ENCODE measurements at regions of chr7 and their contacts with region 1.

Region 1: GRCh38 chr7:44847508-44847920 is 373 bp downstream of the H2AZ2 start:
- DNase-seq: peak; percentile 75 to 92 (median 84)
- ATAC-seq: peak; percentile 45
- H3K4me3 ChIP-seq: peak overlapping the region; percentile 59 to 66
- H3K4me3 Mint-ChIP-seq: peak overlapping the region; percentile 92
- H3K27ac ChIP-seq: peak overlapping the region; percentile 86 to 99
- H3K27ac Mint-ChIP-seq: peak overlapping the region; percentile 96
- H3K4me1 ChIP-seq: peaks cover 30% of the 10 kb centered on the region
- H3K4me1 Mint-ChIP-seq: peaks cover 42% of the 10 kb centered on the region
- H3K27me3 ChIP-seq: no peaks in the 10 kb centered on the region
- H3K27me3 Mint-ChIP-seq: no peaks in the 10 kb centered on the region
- CTCF ChIP-seq: peak; percentile 56

Region 2: GRCh38 chr7:44565097-44565794 is 282.3 kb before region 1 on chr7:
- CTCF ChIA-PET with region 1: interaction called, 12 read pairs
- POLR2A ChIA-PET with region 1: no interaction called
- intact Hi-C with region 1: no loop called
- DNase-seq: peak; percentile 40 to 78 (median 65)
- ATAC-seq: peak; percentile 97
- H3K4me3 ChIP-seq: no peak overlapping the region
- H3K4me3 Mint-ChIP-seq: no peak overlapping the region
- H3K27ac ChIP-seq: no peak overlapping the region
- H3K27ac Mint-ChIP-seq: no peak overlapping the region
- H3K4me1 ChIP-seq: no peaks in the 10 kb centered on the region
- H3K4me1 Mint-ChIP-seq: peaks cover 10% of the 10 kb centered on the region
- H3K27me3 ChIP-seq: no peaks in the 10 kb centered on the region
- H3K27me3 Mint-ChIP-seq: no peaks in the 10 kb centered on the region
- CTCF ChIP-seq: peak; percentile 93

Region 3: DNA sequence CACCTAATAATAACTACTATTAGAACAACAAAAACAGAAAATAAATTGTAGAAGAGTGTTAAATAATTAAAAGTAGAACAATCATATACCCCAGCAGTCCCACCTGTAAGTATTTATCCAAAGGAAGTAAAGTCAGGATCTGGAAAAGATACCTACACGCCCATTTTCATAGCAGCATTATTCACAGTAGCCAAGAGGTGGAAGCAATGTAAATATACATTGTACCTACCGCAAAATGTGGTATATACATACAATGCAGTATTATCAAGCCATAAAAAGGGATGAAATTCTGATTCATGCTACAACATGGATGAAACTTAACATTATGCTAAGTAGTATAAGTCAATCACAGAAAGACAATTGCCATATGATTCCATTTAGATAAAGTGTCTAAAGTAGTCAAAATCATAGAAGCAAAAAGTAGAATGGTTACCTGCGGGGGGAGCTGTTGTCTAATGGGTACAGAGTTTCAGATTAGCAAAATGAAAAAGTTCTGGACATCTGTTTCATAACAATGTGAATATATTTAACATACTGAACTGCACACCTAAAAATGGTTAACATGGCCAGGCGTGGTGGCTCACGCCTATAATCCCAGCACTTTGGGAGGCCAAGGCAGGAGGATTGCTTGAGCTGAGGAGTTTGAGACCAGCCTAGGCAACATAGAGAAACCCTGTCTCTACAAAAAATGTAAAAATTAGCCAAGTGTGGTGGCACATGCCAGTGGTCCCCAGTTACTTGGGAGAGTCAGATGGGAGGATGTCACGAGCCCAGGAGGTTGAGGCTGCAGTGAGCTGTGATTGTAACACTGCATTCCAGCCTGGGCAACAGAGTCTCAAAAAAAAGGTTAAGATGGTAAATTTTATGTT is 259.4 kb before region 1 on chr7:
- CTCF ChIA-PET with region 1: interaction called, 6 read pairs
- POLR2A ChIA-PET with region 1: interaction called, 16 read pairs
- intact Hi-C with region 1: loop called in 1 of 2 experiments (anchors 1 kb)
- DNase-seq: peak; percentile 34 to 79 (median 63)
- ATAC-seq: peak; percentile 81
- H3K4me3 ChIP-seq: no peak overlapping the region
- H3K4me3 Mint-ChIP-seq: no peak overlapping the region
- H3K27ac ChIP-seq: no peak overlapping the region
- H3K27ac Mint-ChIP-seq: no peak overlapping the region
- H3K4me1 ChIP-seq: no peaks in the 10 kb centered on the region
- H3K4me1 Mint-ChIP-seq: peaks cover 6% of the 10 kb centered on the region
- H3K27me3 ChIP-seq: no peaks in the 10 kb centered on the region
- H3K27me3 Mint-ChIP-seq: no peaks in the 10 kb centered on the region
- CTCF ChIP-seq: peak; percentile 68

Region 4: GRCh38 chr7:44638611-44639557 is 208.6 kb before region 1 on chr7:
- CTCF ChIA-PET with region 1: no interaction called
- POLR2A ChIA-PET with region 1: no interaction called
- intact Hi-C with region 1: loop called (anchors 2 kb)
- DNase-seq: peak; percentile 58 to 91 (median 82)
- ATAC-seq: peak; percentile 56
- H3K4me3 ChIP-seq: peak overlapping the region in 1 of 2 experiments; percentile 9
- H3K4me3 Mint-ChIP-seq: peak overlapping the region; percentile 75
- H3K27ac ChIP-seq: peak overlapping the region; percentile 73 to 97
- H3K27ac Mint-ChIP-seq: peak overlapping the region; percentile 99
- H3K4me1 ChIP-seq: peaks cover 59% of the 10 kb centered on the region
- H3K4me1 Mint-ChIP-seq: peaks cover 66% of the 10 kb centered on the region
- H3K27me3 ChIP-seq: no peaks in the 10 kb centered on the region
- H3K27me3 Mint-ChIP-seq: no peaks in the 10 kb centered on the region
- CTCF ChIP-seq: no peak

Region 5: DNA sequence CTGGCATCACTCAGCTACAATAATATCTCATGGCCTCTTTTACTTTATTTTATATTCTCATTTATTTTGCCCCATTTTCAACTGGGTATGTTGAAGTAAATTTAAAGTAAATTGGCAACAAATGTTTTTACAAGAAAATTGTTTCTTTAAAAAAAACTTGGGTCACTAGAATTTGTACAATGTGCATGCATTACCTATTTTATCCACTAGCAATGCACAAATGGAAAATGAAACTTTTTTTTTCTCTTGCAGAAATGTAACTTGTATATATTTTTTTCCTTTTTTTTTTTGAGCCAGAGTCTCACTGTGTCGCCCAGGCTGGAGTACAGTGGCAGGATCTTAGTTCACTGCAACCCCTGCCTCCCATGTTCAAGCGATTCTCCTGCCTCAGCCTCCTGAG is 10.6 kb after region 1 on chr7:
- CTCF ChIA-PET with region 1: interaction called, 28 read pairs
- POLR2A ChIA-PET with region 1: interaction called, 4 read pairs
- intact Hi-C with region 1: no loop called
- DNase-seq: no peak
- ATAC-seq: no peak
- H3K4me3 ChIP-seq: no peak overlapping the region
- H3K4me3 Mint-ChIP-seq: no peak overlapping the region
- H3K27ac ChIP-seq: no peak overlapping the region
- H3K27ac Mint-ChIP-seq: no peak overlapping the region
- H3K4me1 ChIP-seq: no peaks in the 10 kb centered on the region
- H3K4me1 Mint-ChIP-seq: peaks cover 5% of the 10 kb centered on the region
- H3K27me3 ChIP-seq: no peaks in the 10 kb centered on the region
- H3K27me3 Mint-ChIP-seq: no peaks in the 10 kb centered on the region
- CTCF ChIP-seq: peak; percentile 25

Region 6: GRCh38 chr7:44980393-44981034 is 133.0 kb after region 1 on chr7:
- CTCF ChIA-PET with region 1: no interaction called
- POLR2A ChIA-PET with region 1: no interaction called
- intact Hi-C with region 1: loop called (anchors 1 to 5 kb)
- DNase-seq: peak in 6 of 9 experiments; percentile 40 to 95 (median 76)
- ATAC-seq: peak; percentile 43
- H3K4me3 ChIP-seq: no peak overlapping the region
- H3K4me3 Mint-ChIP-seq: peak overlapping the region; percentile 94
- H3K27ac ChIP-seq: peak overlapping the region; percentile 78 to 86
- H3K27ac Mint-ChIP-seq: peak overlapping the region; percentile 99
- H3K4me1 ChIP-seq: peaks cover 72% of the 10 kb centered on the region
- H3K4me1 Mint-ChIP-seq: peaks cover 80% of the 10 kb centered on the region
- H3K27me3 ChIP-seq: no peaks in the 10 kb centered on the region
- H3K27me3 Mint-ChIP-seq: no peaks in the 10 kb centered on the region
- CTCF ChIP-seq: no peak

Region 7: GRCh38 chr7:45111298-45112223 is 264.0 kb after region 1 on chr7 and contains the start of gene TBRG4:
- CTCF ChIA-PET with region 1: no interaction called
- POLR2A ChIA-PET with region 1: interaction called, 3 read pairs
- intact Hi-C with region 1: loop called (anchors 1 kb)
- DNase-seq: peak; percentile 84 to 98 (median 94)
- ATAC-seq: peak; percentile 83
- H3K4me3 ChIP-seq: peak within 1 kb of the TSS; percentile 67 to 96
- H3K4me3 Mint-ChIP-seq: peak within 1 kb of the TSS; percentile 90
- H3K27ac ChIP-seq: peak within 1 kb of the TSS; percentile 94 to 99
- H3K27ac Mint-ChIP-seq: peak within 1 kb of the TSS; percentile 97
- H3K4me1 ChIP-seq: peaks cover 48% of the 10 kb centered on the region
- H3K4me1 Mint-ChIP-seq: peaks cover 48% of the 10 kb centered on the region
- H3K27me3 ChIP-seq: no peaks in the 10 kb centered on the region
- H3K27me3 Mint-ChIP-seq: no peaks in the 10 kb centered on the region
- CTCF ChIP-seq: no peak
- total RNA-seq, gene TBRG4: 75.3 to 79.7 TPM